HepG2 (cell line): ENCODE measurements at regions of chr4 and their contacts with region 1.

Region 1: GRCh38 chr4:38160487-38161207 is 200.4 kb downstream of the PTTG2 start:
- DNase-seq: peak; percentile 98
- ATAC-seq: peak; percentile 90
- H3K4me3 ChIP-seq: no peak overlapping the region
- H3K27ac ChIP-seq: peak overlapping the region; percentile 98
- H3K4me1 ChIP-seq: peaks cover 58% of the 10 kb centered on the region
- H3K27me3 ChIP-seq: no peaks in the 10 kb centered on the region
- CTCF ChIP-seq: no peak
- EP300 ChIP-seq: peak; percentile 95 to 98
- POLR2A ChIP-seq: no peak
- RAD21 ChIP-seq: peak; percentile 45; the same call in 1 of the 2 replicates

Region 2: GRCh38 chr4:38023347-38024205 is 137.1 kb before region 1 on chr4:
- CTCF ChIA-PET with region 1: no interaction called
- POLR2A ChIA-PET with region 1: no interaction called
- in situ Hi-C with region 1: no loop called
- intact Hi-C with region 1: no loop called
- DNase-seq: no peak
- ATAC-seq: no peak
- H3K4me3 ChIP-seq: no peak overlapping the region
- H3K27ac ChIP-seq: no peak overlapping the region
- H3K4me1 ChIP-seq: no peaks in the 10 kb centered on the region
- H3K27me3 ChIP-seq: no peaks in the 10 kb centered on the region
- CTCF ChIP-seq: no peak
- EP300 ChIP-seq: no peak
- POLR2A ChIP-seq: no peak
- RAD21 ChIP-seq: no peak

Region 3: DNA sequence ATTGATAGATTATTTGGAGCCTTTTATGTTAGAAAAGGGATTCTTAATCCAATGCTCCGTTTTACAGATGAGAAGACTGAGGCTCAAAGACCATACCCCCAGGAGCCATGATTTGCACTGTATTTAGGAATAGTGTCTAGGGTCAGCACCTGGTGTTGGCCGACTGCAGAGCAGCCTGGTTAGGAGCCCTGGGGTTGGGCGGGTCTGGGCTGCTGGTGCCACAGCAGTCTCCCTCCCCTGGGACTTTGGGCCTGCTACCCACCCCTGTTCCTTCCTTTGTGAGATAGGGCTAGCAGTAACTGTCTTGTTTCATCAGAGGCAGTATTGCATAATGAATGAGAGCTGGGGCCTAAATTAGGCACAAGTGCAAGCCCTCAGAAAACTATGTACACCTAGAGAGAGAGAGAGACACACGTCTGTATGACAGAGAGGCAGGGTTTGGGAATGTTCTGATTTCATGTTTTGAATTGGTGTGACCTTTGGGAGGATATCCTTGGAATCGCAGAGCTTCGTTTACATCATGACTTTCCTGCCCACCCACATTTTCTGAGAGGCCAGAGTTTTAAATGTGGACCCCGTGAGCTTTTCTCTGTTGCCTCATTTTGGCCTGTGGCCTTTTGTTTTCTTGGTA is 88.7 kb before region 1 on chr4:
- CTCF ChIA-PET with region 1: no interaction called
- POLR2A ChIA-PET with region 1: interaction called, 42 read pairs
- in situ Hi-C with region 1: loop called (anchors 5 kb)
- intact Hi-C with region 1: loop called (anchors 1 kb)
- DNase-seq: peak; percentile 91
- ATAC-seq: peak; percentile 86
- H3K4me3 ChIP-seq: no peak overlapping the region
- H3K27ac ChIP-seq: peak overlapping the region; percentile 97
- H3K4me1 ChIP-seq: peaks cover 81% of the 10 kb centered on the region
- H3K27me3 ChIP-seq: no peaks in the 10 kb centered on the region
- CTCF ChIP-seq: peak; percentile 70
- EP300 ChIP-seq: peak in 1 of 2 experiments; percentile 85; a peak in 2 of 4 replicates
- POLR2A ChIP-seq: no peak
- RAD21 ChIP-seq: no peak

Region 4: GRCh38 chr4:38356686-38357085 is 196.0 kb after region 1 on chr4:
- CTCF ChIA-PET with region 1: no interaction called
- POLR2A ChIA-PET with region 1: no interaction called
- in situ Hi-C with region 1: no loop called
- intact Hi-C with region 1: no loop called
- DNase-seq: no peak
- ATAC-seq: no peak
- H3K4me3 ChIP-seq: no peak overlapping the region
- H3K27ac ChIP-seq: no peak overlapping the region
- H3K4me1 ChIP-seq: no peaks in the 10 kb centered on the region
- H3K27me3 ChIP-seq: no peaks in the 10 kb centered on the region
- CTCF ChIP-seq: no peak
- EP300 ChIP-seq: no peak
- POLR2A ChIP-seq: no peak
- RAD21 ChIP-seq: no peak